A673 (cell line): ENCODE measurements at regions of chr17 and their contacts with region 1.

Region 1: GRCh38 chr17:63621766-63622519 is at the start of gene MAP3K3:
- DNase-seq: peak; percentile 100
- H3K4me3 ChIP-seq: peak within 1 kb of the TSS; percentile 75
- H3K27ac ChIP-seq: peak within 1 kb of the TSS; percentile 80
- H3K4me1 ChIP-seq: peaks cover 14% of the 10 kb centered on the region
- H3K27me3 ChIP-seq: no peaks in the 10 kb centered on the region
- CTCF ChIP-seq: no peak
- total RNA-seq, gene MAP3K3: 25.9 and 27.8 TPM in 2 replicates

Region 2: DNA sequence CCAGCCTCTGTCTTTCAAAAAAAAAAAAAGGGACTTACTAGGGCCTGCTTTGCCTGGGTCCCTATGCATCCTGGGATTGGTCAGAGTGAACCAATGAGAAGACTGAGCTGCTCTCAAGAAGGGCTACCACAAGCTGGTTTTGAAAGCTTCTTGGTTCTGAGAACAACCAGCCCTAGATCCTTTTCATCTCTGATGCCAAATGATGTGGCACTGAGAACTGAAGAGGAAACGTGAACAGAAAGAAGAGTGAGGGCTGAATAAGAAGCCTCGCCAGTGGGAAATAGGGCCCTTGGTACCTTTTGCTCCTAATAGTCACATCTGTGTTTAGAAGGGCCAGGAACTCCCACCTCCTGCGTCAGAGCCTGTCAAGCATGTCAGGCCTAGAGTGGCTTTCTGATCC is 10.6 kb before region 1 on chr17:
- CTCF ChIA-PET with region 1: interaction called, 18 read pairs
- POLR2A ChIA-PET with region 1: interaction called, 15 read pairs
- intact Hi-C with region 1: no loop called
- DNase-seq: no peak
- H3K4me3 ChIP-seq: no peak overlapping the region
- H3K27ac ChIP-seq: no peak overlapping the region
- H3K4me1 ChIP-seq: no peaks in the 10 kb centered on the region
- H3K27me3 ChIP-seq: no peaks in the 10 kb centered on the region
- CTCF ChIP-seq: no peak

Region 3: GRCh38 chr17:63675607-63676413 is 53.9 kb after region 1 on chr17:
- CTCF ChIA-PET with region 1: no interaction called
- POLR2A ChIA-PET with region 1: no interaction called
- intact Hi-C with region 1: loop called (anchors 5 kb)
- DNase-seq: peak; percentile 90
- H3K4me3 ChIP-seq: no peak overlapping the region
- H3K27ac ChIP-seq: peak overlapping the region; percentile 78
- H3K4me1 ChIP-seq: peaks cover 36% of the 10 kb centered on the region
- H3K27me3 ChIP-seq: no peaks in the 10 kb centered on the region
- CTCF ChIP-seq: no peak

Region 4: DNA sequence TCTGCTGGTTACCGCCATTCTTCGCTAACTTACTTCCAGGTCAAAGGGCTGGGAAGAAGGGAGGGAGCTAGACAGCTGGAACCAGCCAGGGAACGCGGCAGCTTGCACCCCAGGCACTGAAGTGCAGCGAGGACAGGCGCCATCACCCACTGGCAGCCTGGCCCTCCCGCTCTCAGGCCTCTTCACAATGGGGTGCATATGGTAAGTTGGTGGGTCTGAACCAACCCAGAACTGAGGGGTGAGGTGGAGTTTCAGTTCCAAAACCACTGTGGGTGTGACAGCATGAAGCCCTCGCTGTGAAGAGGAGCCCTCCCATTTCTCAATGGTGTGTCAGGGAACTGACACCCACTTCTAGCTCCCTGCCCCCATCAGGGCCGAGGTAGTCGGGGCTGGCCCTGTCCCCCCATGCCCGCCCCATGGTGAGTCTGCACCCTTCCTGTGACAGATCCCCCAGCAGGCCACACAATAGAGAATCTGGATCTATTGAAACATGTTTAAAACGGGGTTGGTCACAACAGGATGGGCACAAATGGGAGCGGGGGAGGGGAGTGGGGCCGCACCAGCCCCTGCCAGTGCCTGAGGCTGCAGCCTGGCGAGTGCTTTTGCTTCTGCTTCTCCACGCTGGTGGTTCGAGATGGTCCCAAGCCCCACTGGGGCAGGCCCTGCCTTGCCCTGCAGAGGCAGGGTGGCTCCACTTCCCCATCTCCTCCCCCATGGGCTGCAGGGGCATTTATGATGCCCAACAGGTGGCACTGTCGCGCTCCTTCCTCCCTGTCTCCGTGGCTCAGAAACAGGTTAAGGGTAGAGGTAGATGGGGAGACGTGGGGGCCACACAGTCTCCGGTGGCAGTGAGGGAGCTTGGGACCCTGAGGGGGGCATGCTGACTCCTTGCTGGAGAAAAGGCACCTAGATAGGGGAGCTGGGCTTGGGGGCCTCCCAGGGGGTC is 75.7 kb after region 1 on chr17:
- CTCF ChIA-PET with region 1: no interaction called
- POLR2A ChIA-PET with region 1: no interaction called
- intact Hi-C with region 1: loop called (anchors 5 kb)
- DNase-seq: peak; percentile 63
- H3K4me3 ChIP-seq: peak overlapping the region; percentile 76
- H3K27ac ChIP-seq: peak overlapping the region; percentile 84
- H3K4me1 ChIP-seq: peaks cover 41% of the 10 kb centered on the region
- H3K27me3 ChIP-seq: no peaks in the 10 kb centered on the region
- CTCF ChIP-seq: peak; percentile 68

Region 5: DNA sequence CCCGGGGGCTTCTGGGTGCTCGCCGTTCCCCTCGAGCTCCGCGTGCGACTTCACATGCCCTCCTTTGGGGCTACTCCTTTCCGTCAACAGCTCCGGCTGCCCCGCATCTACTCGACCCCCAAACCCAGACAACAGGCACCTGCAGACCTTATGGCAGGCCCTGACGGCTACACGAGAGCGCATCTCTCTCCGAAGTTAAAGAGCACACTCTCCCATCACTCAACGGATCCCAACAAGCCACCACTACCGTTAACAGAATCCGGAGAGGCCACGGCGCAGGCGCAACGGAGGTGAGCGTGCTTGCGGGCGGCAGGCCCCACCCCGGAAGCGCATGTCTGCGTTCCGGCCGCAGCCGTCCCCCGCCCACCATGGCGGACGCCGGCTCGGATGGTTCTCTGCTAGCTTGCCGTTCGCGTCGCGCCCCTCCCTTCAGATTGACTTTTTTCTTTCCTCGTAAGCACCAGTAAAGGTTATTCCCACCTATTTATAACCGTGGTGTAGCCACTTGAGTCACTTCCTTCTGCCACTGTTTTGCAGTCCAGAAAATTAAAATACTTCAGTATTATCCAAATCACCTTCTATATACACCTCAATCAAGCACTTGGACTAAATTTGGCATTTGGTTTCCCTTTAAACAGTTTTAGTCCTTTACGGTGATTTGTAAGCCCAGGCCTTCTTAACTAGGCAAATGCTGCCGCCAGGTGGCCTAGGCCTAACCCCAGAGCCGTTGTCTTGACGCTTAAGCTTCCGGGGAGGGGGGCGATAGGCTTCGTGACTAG is 875.0 kb after region 1 on chr17 and contains the start of gene POLG2:
- CTCF ChIA-PET with region 1: no interaction called
- POLR2A ChIA-PET with region 1: interaction called, 15 read pairs
- intact Hi-C with region 1: no loop called
- DNase-seq: peak; percentile 97
- H3K4me3 ChIP-seq: peak within 1 kb of the TSS; percentile 88
- H3K27ac ChIP-seq: peak within 1 kb of the TSS; percentile 84
- H3K4me1 ChIP-seq: peaks cover 15% of the 10 kb centered on the region
- H3K27me3 ChIP-seq: no peaks in the 10 kb centered on the region
- CTCF ChIP-seq: peak; percentile 58
- total RNA-seq, gene POLG2: 25.6 and 31.5 TPM in 2 replicates

Region 6: GRCh38 chr17:65176683-65177379 is 1554.9 kb after region 1 on chr17:
- CTCF ChIA-PET with region 1: no interaction called
- POLR2A ChIA-PET with region 1: interaction called, 21 read pairs
- intact Hi-C with region 1: no loop called
- DNase-seq: no peak
- H3K4me3 ChIP-seq: no peak overlapping the region
- H3K27ac ChIP-seq: no peak overlapping the region
- H3K4me1 ChIP-seq: no peaks in the 10 kb centered on the region
- H3K27me3 ChIP-seq: no peaks in the 10 kb centered on the region
- CTCF ChIP-seq: no peak